Naive thymus-derived CD4-positive, alpha-beta T cell (primary cell): ENCODE measurements at regions of chr10 and their contacts with region 1.

Region 1: GRCh38 chr10:5977471-5978229 is at the start of gene IL15RA:
- DNase-seq: peak; percentile 60 to 89 (median 71)
- ATAC-seq: peak; percentile 84
- H3K4me3 ChIP-seq: peak within 1 kb of the TSS; percentile 97
- H3K4me3 Mint-ChIP-seq: peak within 1 kb of the TSS; percentile 89 to 98 (median 96)
- H3K27ac ChIP-seq: peak within 1 kb of the TSS; percentile 74
- H3K27ac Mint-ChIP-seq: peak within 1 kb of the TSS; percentile 85 to 97 (median 89)
- H3K4me1 ChIP-seq: peaks cover 0 to 6% of the 10 kb centered on the region in 2 donors
- H3K4me1 Mint-ChIP-seq: peaks cover 12 to 36% (median 21%) of the 10 kb centered on the region in 7 donors
- H3K27me3 ChIP-seq: no peaks in the 10 kb centered on the region
- H3K27me3 Mint-ChIP-seq: peaks cover 0 to 21% (median 0%) of the 10 kb centered on the region in 5 donors
- total RNA-seq, gene IL15RA: 3.5 to 24.9 (median 5.6) TPM

Region 2: GRCh38 chr10:4825851-4826665 is 1151.6 kb before region 1 on chr10 and contains the start of gene AKR1E2:
- CTCF ChIA-PET with region 1: no interaction called
- POLR2A ChIA-PET with region 1: no interaction called
- intact Hi-C with region 1: loop called in 1 of 2 experiments (anchors 10 kb)
- DNase-seq: peak; percentile 56 to 91 (median 83)
- ATAC-seq: peak; percentile 93
- H3K4me3 ChIP-seq: peak within 1 kb of the TSS; percentile 10
- H3K4me3 Mint-ChIP-seq: peak within 1 kb of the TSS; percentile 61 to 89 (median 84)
- H3K27ac ChIP-seq: peak within 1 kb of the TSS; percentile 72
- H3K27ac Mint-ChIP-seq: peak within 1 kb of the TSS; percentile 12 to 94 (median 85)
- H3K4me1 ChIP-seq: peaks cover 2 to 6% of the 10 kb centered on the region in 2 donors
- H3K4me1 Mint-ChIP-seq: peaks cover 9 to 43% (median 29%) of the 10 kb centered on the region in 7 donors
- H3K27me3 ChIP-seq: peaks cover 0 to 3% of the 10 kb centered on the region in 2 donors
- H3K27me3 Mint-ChIP-seq: peaks cover 0 to 56% (median 31%) of the 10 kb centered on the region in 5 donors
- total RNA-seq, gene AKR1E2: 8.6 to 26.0 (median 25.1) TPM

Region 3: GRCh38 chr10:5629303-5630111 is 348.1 kb before region 1 on chr10:
- CTCF ChIA-PET with region 1: no interaction called
- POLR2A ChIA-PET with region 1: no interaction called
- intact Hi-C with region 1: loop called in 1 of 2 experiments (anchors 2 kb)
- DNase-seq: peak; percentile 63 to 89 (median 82)
- ATAC-seq: peak; percentile 99
- H3K4me3 ChIP-seq: no peak overlapping the region
- H3K4me3 Mint-ChIP-seq: peak overlapping the region in 9 of 10 donors; percentile 28 to 63 (median 53)
- H3K27ac ChIP-seq: no peak overlapping the region
- H3K27ac Mint-ChIP-seq: peak overlapping the region in 3 of 9 donors; percentile 38 to 82 (median 53)
- H3K4me1 ChIP-seq: peaks cover 3 to 10% of the 10 kb centered on the region in 2 donors
- H3K4me1 Mint-ChIP-seq: peaks cover 5 to 22% (median 16%) of the 10 kb centered on the region in 7 donors
- H3K27me3 ChIP-seq: peaks cover 0 to 4% of the 10 kb centered on the region in 2 donors
- H3K27me3 Mint-ChIP-seq: peaks cover 0 to 11% (median 4%) of the 10 kb centered on the region in 5 donors

Region 4: DNA sequence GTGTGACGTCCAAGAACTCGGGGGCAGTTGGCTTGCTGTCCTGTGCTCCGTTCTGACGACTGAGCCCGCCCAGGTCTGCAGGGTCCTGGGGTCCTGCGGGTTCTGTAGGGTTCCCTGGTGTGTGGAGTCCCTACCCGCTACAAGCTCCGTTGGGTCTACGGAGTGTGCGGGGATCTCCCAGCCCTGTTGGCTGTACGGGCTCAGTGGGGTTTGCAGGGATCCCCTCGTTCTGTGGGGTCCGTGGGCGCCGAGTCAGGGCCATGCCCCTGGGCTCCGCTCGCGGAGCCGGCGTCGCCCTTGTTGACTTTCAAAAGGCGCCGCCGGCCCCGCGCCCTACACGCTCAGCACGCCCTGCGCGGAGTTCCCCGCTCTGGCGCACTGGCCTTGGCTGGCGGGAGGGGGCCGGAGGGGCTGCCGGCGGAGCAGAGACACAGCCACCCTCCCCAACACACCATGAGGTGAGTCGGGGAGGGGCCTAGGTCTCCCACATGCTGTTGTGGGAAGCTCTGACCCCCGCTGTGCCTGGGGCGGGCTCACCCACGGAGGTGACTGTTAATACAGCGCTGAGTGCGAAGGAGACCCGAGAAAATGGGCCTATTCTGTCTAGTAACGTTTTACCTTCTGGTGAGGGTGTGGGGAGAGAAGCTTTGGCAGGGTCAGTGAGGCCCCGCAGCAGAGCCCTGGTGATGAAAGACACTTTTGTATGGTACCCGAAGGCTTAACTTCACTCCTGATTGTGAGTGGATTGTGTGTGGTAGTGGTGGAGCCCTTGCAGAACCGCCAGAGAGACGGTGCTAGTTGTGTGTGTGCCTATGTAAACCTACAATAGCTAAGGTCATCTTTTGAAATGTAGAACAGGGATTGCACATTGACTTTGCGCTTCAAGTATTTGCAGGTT is 284.9 kb before region 1 on chr10:
- CTCF ChIA-PET with region 1: no interaction called
- POLR2A ChIA-PET with region 1: no interaction called
- intact Hi-C with region 1: no loop called
- DNase-seq: peak; percentile 36 to 77 (median 58)
- ATAC-seq: peak; percentile 93
- H3K4me3 ChIP-seq: peak overlapping the region; percentile 54
- H3K4me3 Mint-ChIP-seq: peak overlapping the region; percentile 77 to 88 (median 84)
- H3K27ac ChIP-seq: peak overlapping the region; percentile 49
- H3K27ac Mint-ChIP-seq: peak overlapping the region; percentile 50 to 93 (median 80)
- H3K4me1 ChIP-seq: peaks cover 23 to 32% of the 10 kb centered on the region in 2 donors
- H3K4me1 Mint-ChIP-seq: peaks cover 51 to 96% (median 79%) of the 10 kb centered on the region in 7 donors
- H3K27me3 ChIP-seq: no peaks in the 10 kb centered on the region
- H3K27me3 Mint-ChIP-seq: no peaks in the 10 kb centered on the region

Region 5: DNA sequence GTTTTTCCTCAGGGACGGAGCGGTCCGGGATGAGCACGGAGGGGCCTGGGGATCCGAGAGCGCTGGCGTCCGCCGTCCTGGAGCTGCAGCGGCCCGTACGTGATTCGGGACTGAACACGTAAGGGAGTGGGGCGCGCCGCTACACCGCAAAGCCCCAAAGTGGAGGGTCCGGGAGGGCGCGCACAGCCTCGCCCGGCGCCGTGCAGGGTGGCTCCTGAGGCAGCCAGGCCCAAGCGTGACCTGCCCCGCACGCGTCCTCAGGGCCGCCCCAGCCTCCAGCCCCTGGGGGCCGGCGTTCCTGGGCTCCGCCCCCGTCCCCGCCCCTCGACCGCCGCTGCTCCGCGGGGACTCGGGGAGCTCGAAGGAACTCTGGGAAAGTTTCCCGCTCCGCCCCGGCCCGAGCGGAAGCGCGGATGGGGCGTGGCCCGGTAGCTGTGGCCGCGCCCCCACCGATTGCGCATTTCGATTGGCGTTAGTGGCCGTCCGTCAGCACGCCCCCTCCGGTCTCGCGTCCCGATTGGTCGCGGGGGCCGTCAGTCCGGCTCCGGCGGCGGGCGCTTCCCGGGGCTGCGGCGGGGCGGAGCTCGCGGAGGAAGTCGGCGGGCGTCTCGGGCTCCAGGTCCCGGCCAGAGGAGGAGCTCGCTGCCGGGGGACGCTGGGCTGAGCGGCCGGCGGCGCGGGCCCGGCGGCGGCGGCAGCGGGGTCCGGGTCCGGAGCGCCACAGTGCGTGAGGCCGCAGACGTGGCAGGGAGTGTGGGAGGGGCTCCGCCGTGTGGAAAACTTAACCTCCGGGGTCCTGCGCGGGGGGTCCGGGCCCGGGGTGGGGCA is 87.8 kb before region 1 on chr10 and contains the starts of genes ANKRD16 and FBH1:
- CTCF ChIA-PET with region 1: no interaction called
- POLR2A ChIA-PET with region 1: interaction called, 3 read pairs
- intact Hi-C with region 1: loop called (anchors 2 kb)
- DNase-seq: peak; percentile 94 to 100 (median 96)
- ATAC-seq: peak; percentile 96
- H3K4me3 ChIP-seq: peak within 1 kb of the TSS; percentile 70
- H3K4me3 Mint-ChIP-seq: peak within 1 kb of the TSS; percentile 90 to 97 (median 94)
- H3K27ac ChIP-seq: peak within 1 kb of the TSS; percentile 81
- H3K27ac Mint-ChIP-seq: peak within 1 kb of the TSS; percentile 80 to 94 (median 87)
- H3K4me1 ChIP-seq: peaks cover 12% of the 10 kb centered on the region in 2 donors
- H3K4me1 Mint-ChIP-seq: peaks cover 34 to 64% (median 60%) of the 10 kb centered on the region in 7 donors
- H3K27me3 ChIP-seq: no peaks in the 10 kb centered on the region
- H3K27me3 Mint-ChIP-seq: no peaks in the 10 kb centered on the region
- total RNA-seq, gene ANKRD16: 4.6 to 9.8 (median 7.2) TPM
- total RNA-seq, gene FBH1: 64.8 to 105 (median 78.6) TPM

Region 6: GRCh38 chr10:5915451-5915850 is 62.2 kb before region 1 on chr10:
- CTCF ChIA-PET with region 1: no interaction called
- POLR2A ChIA-PET with region 1: no interaction called
- intact Hi-C with region 1: no loop called
- DNase-seq: no peak
- ATAC-seq: no peak
- H3K4me3 ChIP-seq: no peak overlapping the region
- H3K4me3 Mint-ChIP-seq: no peak overlapping the region
- H3K27ac ChIP-seq: no peak overlapping the region
- H3K27ac Mint-ChIP-seq: peak overlapping the region in 1 of 9 donors; percentile 28
- H3K4me1 ChIP-seq: no peaks in the 10 kb centered on the region
- H3K4me1 Mint-ChIP-seq: peaks cover 0 to 8% (median 2%) of the 10 kb centered on the region in 7 donors
- H3K27me3 ChIP-seq: no peaks in the 10 kb centered on the region
- H3K27me3 Mint-ChIP-seq: no peaks in the 10 kb centered on the region

Region 7: GRCh38 chr10:5932345-5932744 is 45.3 kb before region 1 on chr10:
- CTCF ChIA-PET with region 1: no interaction called
- POLR2A ChIA-PET with region 1: no interaction called
- intact Hi-C with region 1: loop called in 1 of 2 experiments (anchors 5 kb)
- DNase-seq: no peak
- ATAC-seq: no peak
- H3K4me3 ChIP-seq: no peak overlapping the region
- H3K4me3 Mint-ChIP-seq: no peak overlapping the region
- H3K27ac ChIP-seq: no peak overlapping the region
- H3K27ac Mint-ChIP-seq: peak overlapping the region in 3 of 9 donors; percentile 41 to 76 (median 43)
- H3K4me1 ChIP-seq: no peaks in the 10 kb centered on the region
- H3K4me1 Mint-ChIP-seq: peaks cover 0 to 3% (median 0%) of the 10 kb centered on the region in 7 donors
- H3K27me3 ChIP-seq: no peaks in the 10 kb centered on the region
- H3K27me3 Mint-ChIP-seq: no peaks in the 10 kb centered on the region

Region 8: GRCh38 chr10:6014241-6014761 is 36.7 kb after region 1 on chr10:
- CTCF ChIA-PET with region 1: interaction called, 4 read pairs
- POLR2A ChIA-PET with region 1: no interaction called
- intact Hi-C with region 1: loop called (anchors 2 to 5 kb)
- DNase-seq: peak in 7 of 9 donors; percentile 73 to 89 (median 86)
- ATAC-seq: peak; percentile 98
- H3K4me3 ChIP-seq: no peak overlapping the region
- H3K4me3 Mint-ChIP-seq: peak overlapping the region in 9 of 10 donors; percentile 5 to 61 (median 36)
- H3K27ac ChIP-seq: peak overlapping the region; percentile 82
- H3K27ac Mint-ChIP-seq: peak overlapping the region; percentile 85 to 99 (median 96)
- H3K4me1 ChIP-seq: peaks cover 9 to 15% of the 10 kb centered on the region in 2 donors
- H3K4me1 Mint-ChIP-seq: peaks cover 3 to 55% (median 25%) of the 10 kb centered on the region in 7 donors
- H3K27me3 ChIP-seq: no peaks in the 10 kb centered on the region
- H3K27me3 Mint-ChIP-seq: no peaks in the 10 kb centered on the region

Region 9: GRCh38 chr10:6163364-6164270 is 186.0 kb after region 1 on chr10:
- CTCF ChIA-PET with region 1: no interaction called
- POLR2A ChIA-PET with region 1: no interaction called
- intact Hi-C with region 1: loop called in 1 of 2 experiments (anchors 10 kb)
- DNase-seq: peak; percentile 89 to 95 (median 94)
- ATAC-seq: peak; percentile 96
- H3K4me3 ChIP-seq: peak overlapping the region; percentile 81
- H3K4me3 Mint-ChIP-seq: peak overlapping the region; percentile 85 to 95 (median 92)
- H3K27ac ChIP-seq: peak overlapping the region; percentile 95
- H3K27ac Mint-ChIP-seq: peak overlapping the region; percentile 91 to 99 (median 97)
- H3K4me1 ChIP-seq: peaks cover 25 to 33% of the 10 kb centered on the region in 2 donors
- H3K4me1 Mint-ChIP-seq: peaks cover 30 to 64% (median 57%) of the 10 kb centered on the region in 7 donors
- H3K27me3 ChIP-seq: no peaks in the 10 kb centered on the region
- H3K27me3 Mint-ChIP-seq: no peaks in the 10 kb centered on the region